PC-9 (cell line): ENCODE measurements at regions of chr15 and their contacts with region 1.

Region 1: GRCh38 chr15:65832549-65833364 is 36.5 kb upstream of the RAB11A start:
- DNase-seq: peak; percentile 84 to 98
- H3K4me3 ChIP-seq: peak overlapping the region; percentile 7; the same call in 1 of the 2 replicates
- H3K27ac ChIP-seq: peak overlapping the region; percentile 87
- H3K4me1 ChIP-seq: peaks cover 20% of the 10 kb centered on the region
- H3K27me3 ChIP-seq: no peaks in the 10 kb centered on the region
- CTCF ChIP-seq: no peak; the same call in 1 of the 2 replicates

Region 2: GRCh38 chr15:63933522-63933921 is 1899.2 kb before region 1 on chr15:
- CTCF ChIA-PET with region 1: no interaction called
- POLR2A ChIA-PET with region 1: no interaction called
- intact Hi-C with region 1: no loop called
- DNase-seq: peak in 1 of 2 experiments; percentile 8
- H3K4me3 ChIP-seq: no peak overlapping the region
- H3K27ac ChIP-seq: no peak overlapping the region
- H3K4me1 ChIP-seq: no peaks in the 10 kb centered on the region
- H3K27me3 ChIP-seq: no peaks in the 10 kb centered on the region
- CTCF ChIP-seq: no peak

Region 3: DNA sequence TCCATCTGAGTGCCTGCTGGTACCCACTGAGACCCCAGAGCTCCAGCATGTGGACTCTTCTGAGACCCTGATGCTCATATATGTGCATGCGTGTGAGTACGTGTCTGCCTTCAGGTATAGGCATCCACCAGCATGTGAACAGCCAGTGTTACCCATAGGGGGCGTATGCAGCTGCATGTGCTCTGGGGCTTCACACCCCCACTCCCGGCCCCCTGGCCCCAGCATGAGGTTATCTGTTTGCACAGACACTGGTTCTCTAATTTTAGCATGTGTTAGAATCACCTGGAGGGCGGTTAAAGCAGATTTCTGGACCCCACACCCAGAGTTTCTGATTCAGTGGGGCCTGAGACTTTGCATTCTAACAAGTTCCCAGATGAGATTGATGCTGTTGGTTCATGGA is 620.7 kb before region 1 on chr15:
- CTCF ChIA-PET with region 1: no interaction called
- POLR2A ChIA-PET with region 1: no interaction called
- intact Hi-C with region 1: no loop called
- DNase-seq: no peak
- H3K4me3 ChIP-seq: no peak overlapping the region
- H3K27ac ChIP-seq: no peak overlapping the region
- H3K4me1 ChIP-seq: peaks cover 34% of the 10 kb centered on the region
- H3K27me3 ChIP-seq: no peaks in the 10 kb centered on the region
- CTCF ChIP-seq: peak; percentile 58

Region 4: GRCh38 chr15:65304389-65305144 is 528.2 kb before region 1 on chr15 and contains the start of gene RNU5B-1:
- CTCF ChIA-PET with region 1: no interaction called
- POLR2A ChIA-PET with region 1: interaction called, 12 read pairs
- intact Hi-C with region 1: no loop called
- DNase-seq: peak; percentile 85 to 96
- H3K4me3 ChIP-seq: peak within 1 kb of the TSS; percentile 57
- H3K27ac ChIP-seq: peak within 1 kb of the TSS; percentile 95
- H3K4me1 ChIP-seq: peaks cover 9% of the 10 kb centered on the region; the same call in 1 of the 2 replicates
- H3K27me3 ChIP-seq: no peaks in the 10 kb centered on the region
- CTCF ChIP-seq: no peak; the same call in 1 of the 2 replicates
- total RNA-seq, gene RNU5B-1: not detected in 2 replicates

Region 5: DNA sequence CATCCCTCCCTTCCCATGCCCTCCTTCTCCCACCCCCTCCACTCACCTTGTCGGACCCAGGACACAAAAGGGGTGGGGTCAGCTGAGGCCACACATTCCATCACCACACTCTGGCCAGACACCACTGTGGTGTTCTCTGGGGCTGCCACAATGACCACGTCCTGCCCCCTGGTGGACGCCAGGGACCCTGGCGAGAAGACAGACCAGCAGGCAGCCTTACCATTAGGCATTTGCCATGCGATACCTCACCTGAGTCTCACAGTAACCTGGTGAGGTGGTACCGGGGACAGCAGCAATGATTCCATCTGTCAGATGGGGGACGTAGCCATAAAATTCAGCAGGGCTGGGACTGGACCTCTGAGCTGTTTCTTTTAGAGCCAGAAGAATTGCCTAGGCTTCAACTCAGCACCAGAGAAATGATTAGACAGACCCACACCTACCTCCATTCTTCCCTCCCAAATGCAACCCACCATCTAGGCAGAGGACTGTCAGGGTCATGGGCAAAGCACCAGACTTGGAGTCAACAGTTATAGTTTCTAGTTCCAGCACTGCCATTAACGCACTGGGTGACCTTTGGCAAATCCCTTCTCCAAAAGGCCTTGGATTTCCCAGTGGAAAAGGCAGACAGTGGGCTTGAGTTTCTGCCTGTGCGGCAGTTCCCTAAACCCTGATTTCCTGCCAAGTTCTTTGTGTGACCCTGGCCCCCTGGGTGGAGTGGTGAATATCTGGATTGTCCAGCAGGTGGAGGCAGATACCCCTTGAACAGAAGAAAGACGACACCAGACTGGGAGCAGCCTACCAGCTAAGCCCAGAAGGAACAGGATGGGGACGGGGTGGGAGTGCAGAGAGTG is 431.8 kb before region 1 on chr15:
- CTCF ChIA-PET with region 1: no interaction called
- POLR2A ChIA-PET with region 1: no interaction called
- intact Hi-C with region 1: loop called (anchors 10 kb)
- DNase-seq: peak in 1 of 2 experiments; percentile 60
- H3K4me3 ChIP-seq: no peak overlapping the region
- H3K27ac ChIP-seq: no peak overlapping the region
- H3K4me1 ChIP-seq: no peaks in the 10 kb centered on the region
- H3K27me3 ChIP-seq: no peaks in the 10 kb centered on the region
- CTCF ChIP-seq: peak; percentile 70

Region 6: GRCh38 chr15:65610871-65611718 is 221.7 kb before region 1 on chr15 and contains the start of gene INTS14:
- CTCF ChIA-PET with region 1: interaction called, 3 read pairs
- POLR2A ChIA-PET with region 1: no interaction called
- intact Hi-C with region 1: loop called (anchors 1 kb)
- DNase-seq: peak; percentile 79 to 97
- H3K4me3 ChIP-seq: peak within 1 kb of the TSS; percentile 88
- H3K27ac ChIP-seq: peak within 1 kb of the TSS; percentile 91
- H3K4me1 ChIP-seq: peaks cover 21% of the 10 kb centered on the region
- H3K27me3 ChIP-seq: no peaks in the 10 kb centered on the region
- CTCF ChIP-seq: peak; percentile 68
- total RNA-seq, gene INTS14: 46.6 and 53.7 TPM in 2 replicates

Region 7: GRCh38 chr15:65792130-65792987 is 40.4 kb before region 1 on chr15 and contains the start of gene DENND4A:
- CTCF ChIA-PET with region 1: interaction called, 11 read pairs
- POLR2A ChIA-PET with region 1: no interaction called
- intact Hi-C with region 1: loop called (anchors 2 kb)
- DNase-seq: peak; percentile 86 to 97
- H3K4me3 ChIP-seq: peak within 1 kb of the TSS; percentile 86
- H3K27ac ChIP-seq: peak within 1 kb of the TSS; percentile 77
- H3K4me1 ChIP-seq: peaks cover 41% of the 10 kb centered on the region
- H3K27me3 ChIP-seq: no peaks in the 10 kb centered on the region
- CTCF ChIP-seq: no peak
- total RNA-seq, gene DENND4A: 12.6 and 16.3 TPM in 2 replicates

Region 8: DNA sequence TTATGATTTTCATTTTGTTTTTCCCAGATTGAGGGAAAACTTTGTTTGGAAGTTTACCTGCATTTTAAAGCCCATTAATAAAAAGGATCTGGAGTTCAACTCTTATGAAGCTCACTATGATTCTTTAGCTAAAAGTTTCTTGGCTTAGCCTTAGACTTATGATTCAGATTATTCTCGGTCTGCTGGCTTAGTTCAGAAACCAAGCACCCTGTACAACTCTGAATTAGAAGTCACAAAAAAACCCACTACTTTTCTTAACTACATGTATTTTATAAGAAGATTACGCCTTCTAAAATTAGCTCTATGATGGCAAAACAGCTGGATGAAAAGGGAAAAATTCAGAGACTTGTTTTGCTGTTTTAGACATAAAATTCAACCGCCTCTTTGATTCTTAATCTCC is 26.4 kb before region 1 on chr15:
- CTCF ChIA-PET with region 1: no interaction called
- POLR2A ChIA-PET with region 1: interaction called, 11 read pairs
- intact Hi-C with region 1: no loop called
- DNase-seq: no peak
- H3K4me3 ChIP-seq: no peak overlapping the region
- H3K27ac ChIP-seq: no peak overlapping the region
- H3K4me1 ChIP-seq: no peaks in the 10 kb centered on the region
- H3K27me3 ChIP-seq: no peaks in the 10 kb centered on the region
- CTCF ChIP-seq: no peak

Region 9: DNA sequence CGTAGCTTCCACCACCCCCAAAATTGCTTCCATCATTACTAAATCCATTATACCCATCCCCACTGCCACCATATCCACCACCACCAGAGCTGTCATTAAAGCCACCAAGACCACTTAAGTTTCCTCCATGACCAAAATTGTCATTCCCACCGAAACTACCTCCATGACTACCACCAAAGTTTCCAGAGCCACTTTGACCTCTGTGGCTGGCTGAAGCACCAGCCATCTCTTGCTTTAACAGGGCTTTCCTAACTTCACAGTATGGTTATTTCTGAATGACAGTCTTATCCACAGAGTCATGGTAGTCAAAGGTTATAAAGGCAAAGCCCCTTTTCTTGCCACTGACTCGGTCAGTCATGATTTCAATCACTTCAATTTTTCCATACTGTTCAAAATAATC is 16.3 kb before region 1 on chr15:
- CTCF ChIA-PET with region 1: no interaction called
- POLR2A ChIA-PET with region 1: no interaction called
- intact Hi-C with region 1: no loop called
- DNase-seq: no peak
- H3K4me3 ChIP-seq: no peak overlapping the region
- H3K27ac ChIP-seq: no peak overlapping the region
- H3K4me1 ChIP-seq: no peaks in the 10 kb centered on the region
- H3K27me3 ChIP-seq: no peaks in the 10 kb centered on the region
- CTCF ChIP-seq: no peak

Region 10: DNA sequence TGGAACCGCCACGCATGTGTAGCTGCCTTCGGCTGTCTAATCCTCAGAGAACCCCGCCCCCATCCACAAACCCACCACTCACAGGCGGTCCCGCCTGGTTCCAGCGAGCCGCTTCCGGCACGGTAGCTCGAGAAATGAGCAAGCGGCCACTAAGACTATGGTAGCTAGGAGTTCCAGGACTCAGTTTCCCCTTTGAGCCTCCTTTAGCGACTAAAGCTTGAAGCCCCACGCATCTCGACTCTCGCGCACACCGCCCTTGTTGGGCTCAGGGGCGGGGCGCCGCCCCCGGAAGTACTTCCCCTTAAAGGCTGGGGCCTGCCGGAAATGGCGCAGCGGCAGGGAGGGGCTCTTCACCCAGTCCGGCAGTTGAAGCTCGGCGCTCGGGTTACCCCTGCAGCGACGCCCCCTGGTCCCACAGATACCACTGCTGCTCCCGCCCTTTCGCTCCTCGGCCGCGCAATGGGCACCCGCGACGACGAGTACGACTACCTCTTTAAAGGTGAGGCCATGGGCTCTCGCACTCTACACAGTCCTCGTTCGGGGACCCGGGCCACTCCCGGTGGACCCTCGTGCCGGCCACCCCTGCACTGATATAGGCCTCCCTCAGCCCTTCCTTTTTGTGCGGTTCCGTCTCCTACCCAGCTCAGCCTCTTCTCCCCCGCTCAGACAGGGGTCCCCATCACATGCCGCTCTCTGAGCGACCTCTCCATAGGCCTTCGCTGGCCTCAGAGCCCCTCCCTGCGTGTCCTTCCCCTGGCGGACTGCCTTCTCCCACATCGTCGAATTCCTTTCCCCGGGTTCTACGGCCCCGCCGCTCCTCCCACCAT is 36.6 kb after region 1 on chr15 and contains the start of gene RAB11A:
- CTCF ChIA-PET with region 1: interaction called, 3 read pairs
- POLR2A ChIA-PET with region 1: interaction called, 6 read pairs
- intact Hi-C with region 1: loop called (anchors 2 kb)
- DNase-seq: peak; percentile 88 to 94
- H3K4me3 ChIP-seq: peak within 1 kb of the TSS; percentile 96
- H3K27ac ChIP-seq: peak within 1 kb of the TSS; percentile 85
- H3K4me1 ChIP-seq: peaks cover 21% of the 10 kb centered on the region; the same call in 1 of the 2 replicates
- H3K27me3 ChIP-seq: no peaks in the 10 kb centered on the region
- CTCF ChIP-seq: no peak; the same call in 1 of the 2 replicates
- total RNA-seq, gene RAB11A: 186 and 233 TPM in 2 replicates